Sigmoid colon (tissue), 7 donors: ENCODE measurements at regions of chr18 and their contacts with region 1.

Region 1: DNA sequence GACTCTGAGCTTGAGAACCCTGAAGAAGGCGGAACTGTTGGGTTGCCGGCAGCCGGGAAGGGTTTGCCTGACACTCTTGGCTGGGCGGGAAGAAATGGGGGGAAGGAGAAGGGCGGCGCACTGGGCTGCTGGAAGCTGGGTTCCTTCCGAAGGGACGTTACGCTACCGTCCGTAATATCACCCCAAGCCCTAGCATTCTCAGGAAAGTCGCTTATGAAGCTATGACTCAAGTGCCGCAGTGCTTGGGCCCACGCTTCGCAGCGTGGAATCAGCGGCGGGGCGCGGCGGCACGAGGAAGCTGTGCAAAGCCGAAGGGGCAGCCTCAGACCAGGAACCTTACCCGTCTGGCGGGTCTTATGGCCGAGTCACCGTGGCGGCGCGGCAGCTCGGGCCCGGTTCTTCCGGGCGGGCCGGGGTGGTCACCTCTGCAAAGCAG is 50.2 kb upstream of the SIGLEC15 start:
- DNase-seq: peak; percentile 84
- H3K4me3 ChIP-seq: peak overlapping the region; percentile 48 to 72 (median 62)
- H3K27ac ChIP-seq: peak overlapping the region; percentile 66 to 78 (median 72)
- H3K4me1 ChIP-seq: peaks cover 0 to 15% (median 7%) of the 10 kb centered on the region in 4 donors
- H3K27me3 ChIP-seq: peaks cover 0 to 13% (median 0%) of the 10 kb centered on the region in 3 donors
- CTCF ChIP-seq: no peak
- EP300 ChIP-seq: no peak
- POLR2A ChIP-seq: peak in 1 of 2 donors; percentile 9

Region 2: DNA sequence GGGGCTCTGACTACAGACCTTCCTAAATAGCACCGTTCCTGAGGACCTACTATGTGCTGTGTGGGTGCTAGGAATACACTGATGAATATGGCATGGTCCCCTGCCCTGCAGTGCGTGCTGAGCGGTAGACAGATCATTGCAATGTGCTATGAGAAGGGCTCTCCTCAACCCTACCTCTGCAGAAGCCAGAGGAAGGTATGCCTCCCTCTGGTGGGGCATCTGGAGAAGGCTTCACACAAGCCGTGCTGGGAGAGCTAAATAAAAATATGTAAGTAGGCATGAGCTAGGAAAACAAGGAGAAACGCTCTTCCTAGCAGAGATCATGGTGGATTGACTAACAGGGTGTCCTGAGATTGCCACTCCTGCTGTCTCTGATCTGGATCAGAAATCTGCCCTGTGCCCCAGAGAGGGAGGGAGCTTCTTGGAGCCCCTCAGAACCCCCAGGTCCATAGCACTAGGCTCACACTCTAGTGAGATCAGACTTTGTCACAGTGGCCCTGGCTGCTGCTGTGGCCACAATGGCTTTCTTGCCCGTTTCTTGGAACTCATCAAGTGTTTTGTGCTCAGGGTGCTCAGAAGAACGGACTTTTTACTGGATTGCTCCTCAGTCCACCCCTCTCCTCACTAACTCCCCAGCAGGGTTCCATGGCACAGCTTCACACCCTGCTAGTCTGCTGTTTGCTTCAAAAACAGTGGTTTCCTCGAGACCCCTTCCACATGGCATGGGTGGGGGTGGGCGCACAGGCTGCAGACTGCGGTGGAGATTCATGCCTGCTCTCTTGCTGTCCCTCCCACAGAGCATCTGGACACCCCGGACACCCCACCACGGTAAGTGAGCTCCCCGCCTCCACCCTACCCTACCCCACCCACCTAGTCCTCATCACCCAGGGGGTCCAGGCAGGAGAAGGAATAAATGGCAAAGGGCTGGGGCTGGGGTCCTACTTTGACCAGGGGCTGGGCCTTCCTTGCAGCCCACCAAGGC is 64.4 kb after region 1 on chr18:
- intact Hi-C with region 1: loop called (anchors 10 kb)
- DNase-seq: no peak
- H3K4me3 ChIP-seq: no peak overlapping the region
- H3K27ac ChIP-seq: no peak overlapping the region
- H3K4me1 ChIP-seq: peaks cover 0 to 24% (median 20%) of the 10 kb centered on the region in 4 donors
- H3K27me3 ChIP-seq: peaks cover 23 to 67% (median 44%) of the 10 kb centered on the region in 3 donors
- CTCF ChIP-seq: no peak
- EP300 ChIP-seq: no peak
- POLR2A ChIP-seq: no peak

Region 3: GRCh38 chr18:46324087-46324958 is 549.1 kb after region 1 on chr18:
- intact Hi-C with region 1: no loop called
- DNase-seq: no peak
- H3K4me3 ChIP-seq: no peak overlapping the region
- H3K27ac ChIP-seq: no peak overlapping the region
- H3K4me1 ChIP-seq: no peaks in the 10 kb centered on the region
- H3K27me3 ChIP-seq: no peaks in the 10 kb centered on the region
- CTCF ChIP-seq: no peak
- EP300 ChIP-seq: no peak
- POLR2A ChIP-seq: no peak